ENCODE measurements at regions of chr6 and their contacts with region 1.

Region 1: GRCh38 chr6:1596088-1596852 is 13.4 kb upstream of the FOXC1 start:
- DNase-seq: peak; percentile 30 to 78 (median 67)
- ATAC-seq: peak; percentile 84
- H3K4me3 ChIP-seq: no peak overlapping the region
- H3K4me3 Mint-ChIP-seq: no peak overlapping the region
- H3K27ac ChIP-seq: no peak overlapping the region
- H3K27ac Mint-ChIP-seq: no peak overlapping the region
- H3K4me1 ChIP-seq: no peaks in the 10 kb centered on the region
- H3K4me1 Mint-ChIP-seq: peaks cover 2% of the 10 kb centered on the region
- H3K27me3 ChIP-seq: peaks cover 3 to 16% of the 10 kb centered on the region in 2 experiments
- H3K27me3 Mint-ChIP-seq: peaks cover 59% of the 10 kb centered on the region
- CTCF ChIP-seq: peak; percentile 76

Region 2: GRCh38 chr6:1311400-1312202 is 284.7 kb before region 1 on chr6 and contains the start of gene FOXQ1:
- CTCF ChIA-PET with region 1: no interaction called
- POLR2A ChIA-PET with region 1: no interaction called
- intact Hi-C with region 1: no loop called
- DNase-seq: no peak
- ATAC-seq: no peak
- H3K4me3 ChIP-seq: no peak within 1 kb of the TSS
- H3K4me3 Mint-ChIP-seq: peak within 1 kb of the TSS; percentile 43
- H3K27ac ChIP-seq: no peak within 1 kb of the TSS
- H3K27ac Mint-ChIP-seq: no peak within 1 kb of the TSS
- H3K4me1 ChIP-seq: peaks cover 10% of the 10 kb centered on the region
- H3K4me1 Mint-ChIP-seq: peaks cover 29% of the 10 kb centered on the region
- H3K27me3 ChIP-seq: peaks cover 0 to 8% of the 10 kb centered on the region in 2 experiments
- H3K27me3 Mint-ChIP-seq: peaks cover 64% of the 10 kb centered on the region
- CTCF ChIP-seq: no peak
- total RNA-seq, gene FOXQ1: not detected

Region 3: GRCh38 chr6:1581120-1581991 is 14.9 kb before region 1 on chr6:
- CTCF ChIA-PET with region 1: interaction called, 15 read pairs
- POLR2A ChIA-PET with region 1: no interaction called
- intact Hi-C with region 1: no loop called
- DNase-seq: no peak
- ATAC-seq: no peak
- H3K4me3 ChIP-seq: no peak overlapping the region
- H3K4me3 Mint-ChIP-seq: no peak overlapping the region
- H3K27ac ChIP-seq: no peak overlapping the region
- H3K27ac Mint-ChIP-seq: no peak overlapping the region
- H3K4me1 ChIP-seq: no peaks in the 10 kb centered on the region
- H3K4me1 Mint-ChIP-seq: no peaks in the 10 kb centered on the region
- H3K27me3 ChIP-seq: no peaks in the 10 kb centered on the region
- H3K27me3 Mint-ChIP-seq: peaks cover 12% of the 10 kb centered on the region
- CTCF ChIP-seq: no peak

Region 4: DNA sequence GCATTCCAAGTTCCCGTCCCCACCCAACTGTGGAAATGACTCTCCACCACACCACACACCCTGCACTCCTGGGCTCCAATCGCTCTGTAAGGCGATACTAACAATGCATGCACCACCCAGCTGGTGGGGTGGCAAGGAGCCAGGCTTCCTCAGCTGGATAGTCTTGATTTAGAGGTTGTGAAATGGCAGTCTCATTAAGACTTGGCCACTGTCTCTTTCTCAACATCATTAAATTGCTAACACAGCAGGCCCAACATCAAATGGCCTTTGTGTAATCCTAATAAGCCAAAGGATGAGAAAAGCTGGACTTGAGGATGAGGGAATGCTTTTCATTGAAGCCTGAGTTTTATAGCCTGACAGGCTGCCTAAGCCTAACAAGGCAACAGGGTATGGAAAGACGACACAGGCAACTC is 425.4 kb after region 1 on chr6:
- CTCF ChIA-PET with region 1: no interaction called
- POLR2A ChIA-PET with region 1: no interaction called
- intact Hi-C with region 1: no loop called
- DNase-seq: no peak
- ATAC-seq: no peak
- H3K4me3 ChIP-seq: no peak overlapping the region
- H3K4me3 Mint-ChIP-seq: no peak overlapping the region
- H3K27ac ChIP-seq: no peak overlapping the region
- H3K27ac Mint-ChIP-seq: no peak overlapping the region
- H3K4me1 ChIP-seq: peaks cover 17% of the 10 kb centered on the region
- H3K4me1 Mint-ChIP-seq: peaks cover 25% of the 10 kb centered on the region
- H3K27me3 ChIP-seq: no peaks in the 10 kb centered on the region
- H3K27me3 Mint-ChIP-seq: no peaks in the 10 kb centered on the region
- CTCF ChIP-seq: no peak

Region 5: GRCh38 chr6:2196079-2196679 is 599.9 kb after region 1 on chr6:
- CTCF ChIA-PET with region 1: interaction called, 29 read pairs
- POLR2A ChIA-PET with region 1: no interaction called
- intact Hi-C with region 1: loop called (anchors 1 to 2 kb)
- DNase-seq: peak in 4 of 9 experiments; percentile 26 to 68 (median 51)
- ATAC-seq: peak; percentile 72
- H3K4me3 ChIP-seq: no peak overlapping the region
- H3K4me3 Mint-ChIP-seq: no peak overlapping the region
- H3K27ac ChIP-seq: no peak overlapping the region
- H3K27ac Mint-ChIP-seq: no peak overlapping the region
- H3K4me1 ChIP-seq: no peaks in the 10 kb centered on the region
- H3K4me1 Mint-ChIP-seq: peaks cover 3% of the 10 kb centered on the region
- H3K27me3 ChIP-seq: no peaks in the 10 kb centered on the region
- H3K27me3 Mint-ChIP-seq: no peaks in the 10 kb centered on the region
- CTCF ChIP-seq: peak; percentile 86

Region 6: DNA sequence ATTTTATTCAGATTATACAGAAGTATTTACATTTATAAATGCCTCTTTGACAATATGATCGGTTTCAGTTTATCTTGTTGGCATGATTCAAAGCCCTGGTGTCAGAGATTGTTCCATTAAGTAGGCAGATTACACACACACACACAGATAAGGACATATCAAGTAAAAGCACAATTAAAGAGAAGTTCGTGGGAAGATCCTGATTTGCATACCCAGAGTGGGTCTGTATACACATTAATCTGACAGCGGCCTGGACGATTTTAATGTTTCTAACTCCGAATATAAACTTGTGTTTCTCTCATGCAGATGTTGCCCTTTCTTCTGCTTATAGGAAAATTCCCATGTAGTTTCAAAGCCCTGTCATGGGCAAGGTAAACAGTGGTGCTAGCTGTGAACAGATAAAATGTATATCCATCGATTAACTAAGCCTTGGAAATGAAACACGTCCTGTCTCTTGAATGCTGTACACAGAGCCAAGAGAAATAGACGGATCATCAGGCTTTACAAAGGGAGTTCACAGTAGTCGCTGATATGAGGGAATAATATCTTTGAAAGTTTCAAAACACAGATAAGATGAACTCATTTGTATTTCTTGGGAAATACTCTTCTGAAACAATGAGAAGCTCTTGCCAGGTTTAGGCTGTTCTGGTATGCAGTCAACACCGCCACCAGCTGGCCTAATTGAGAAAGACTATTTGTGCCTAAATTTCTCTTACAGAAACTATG is 757.3 kb after region 1 on chr6:
- CTCF ChIA-PET with region 1: interaction called, 51 read pairs
- POLR2A ChIA-PET with region 1: no interaction called
- intact Hi-C with region 1: loop called (anchors 1 to 2 kb)
- DNase-seq: peak; percentile 10 to 62 (median 48)
- ATAC-seq: no peak
- H3K4me3 ChIP-seq: no peak overlapping the region
- H3K4me3 Mint-ChIP-seq: no peak overlapping the region
- H3K27ac ChIP-seq: no peak overlapping the region
- H3K27ac Mint-ChIP-seq: no peak overlapping the region
- H3K4me1 ChIP-seq: no peaks in the 10 kb centered on the region
- H3K4me1 Mint-ChIP-seq: no peaks in the 10 kb centered on the region
- H3K27me3 ChIP-seq: no peaks in the 10 kb centered on the region
- H3K27me3 Mint-ChIP-seq: no peaks in the 10 kb centered on the region
- CTCF ChIP-seq: peak; percentile 75

Measured in CD8-positive, alpha-beta T cell (primary cell).